ENCODE measurements at regions of chr5 and their contacts with region 1.

Region 1: GRCh38 chr5:167105941-167106340 is 1185.5 kb upstream of the WWC1 start:
- DNase-seq: no peak
- H3K4me3 ChIP-seq: no peak overlapping the region
- H3K27ac ChIP-seq: no peak overlapping the region
- H3K4me1 ChIP-seq: no peaks in the 10 kb centered on the region
- CTCF ChIP-seq: no peak

Region 2: GRCh38 chr5:166726406-166726805 is 379.5 kb before region 1 on chr5:
- CTCF ChIA-PET with region 1: no interaction called
- POLR2A ChIA-PET with region 1: interaction called, 10 read pairs
- intact Hi-C with region 1: no loop called
- DNase-seq: no peak
- H3K4me3 ChIP-seq: no peak overlapping the region
- H3K27ac ChIP-seq: no peak overlapping the region
- H3K4me1 ChIP-seq: no peaks in the 10 kb centered on the region
- CTCF ChIP-seq: no peak

Region 3: DNA sequence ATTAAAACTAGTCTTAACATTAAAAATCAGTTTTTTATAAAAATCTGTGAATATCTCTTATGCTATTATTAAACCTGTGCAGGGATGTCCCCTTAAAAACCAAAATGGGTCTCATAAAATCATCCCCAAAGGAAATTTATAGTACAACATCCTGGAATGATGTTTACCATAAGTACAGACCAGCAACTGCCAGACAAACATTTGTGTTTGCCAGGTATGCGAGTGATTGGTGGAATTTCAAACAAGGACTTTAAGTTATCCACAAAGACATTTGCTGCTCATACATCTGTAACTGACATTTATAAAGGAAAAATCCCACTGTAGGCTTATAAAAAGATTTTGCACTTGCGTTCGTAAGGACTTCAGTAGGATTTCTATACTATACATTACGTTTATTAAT is 189.9 kb before region 1 on chr5:
- CTCF ChIA-PET with region 1: no interaction called
- POLR2A ChIA-PET with region 1: no interaction called
- intact Hi-C with region 1: no loop called
- DNase-seq: no peak
- H3K4me3 ChIP-seq: no peak overlapping the region
- H3K27ac ChIP-seq: no peak overlapping the region
- H3K4me1 ChIP-seq: no peaks in the 10 kb centered on the region
- CTCF ChIP-seq: no peak

Region 4: GRCh38 chr5:167122267-167122666 is 16.3 kb after region 1 on chr5:
- CTCF ChIA-PET with region 1: no interaction called
- POLR2A ChIA-PET with region 1: no interaction called
- intact Hi-C with region 1: no loop called
- DNase-seq: no peak
- H3K4me3 ChIP-seq: no peak overlapping the region
- H3K27ac ChIP-seq: no peak overlapping the region
- H3K4me1 ChIP-seq: no peaks in the 10 kb centered on the region
- CTCF ChIP-seq: no peak

Measured in OCI-LY7 (cell line).